ENCODE measurements at regions of chr15 and their contacts with region 1.

Region 1: GRCh38 chr15:77455696-77456321 is 35.1 kb downstream of the HMG20A start:
- DNase-seq: peak; percentile 95
- H3K4me3 ChIP-seq: peak overlapping the region in 1 of 3 experiments; percentile 23
- H3K27ac ChIP-seq: peak overlapping the region; percentile 96
- H3K4me1 ChIP-seq: peaks cover 54% of the 10 kb centered on the region
- H3K27me3 ChIP-seq: no peaks in the 10 kb centered on the region
- CTCF ChIP-seq: no peak
- POLR2A ChIP-seq: no peak

Region 2: DNA sequence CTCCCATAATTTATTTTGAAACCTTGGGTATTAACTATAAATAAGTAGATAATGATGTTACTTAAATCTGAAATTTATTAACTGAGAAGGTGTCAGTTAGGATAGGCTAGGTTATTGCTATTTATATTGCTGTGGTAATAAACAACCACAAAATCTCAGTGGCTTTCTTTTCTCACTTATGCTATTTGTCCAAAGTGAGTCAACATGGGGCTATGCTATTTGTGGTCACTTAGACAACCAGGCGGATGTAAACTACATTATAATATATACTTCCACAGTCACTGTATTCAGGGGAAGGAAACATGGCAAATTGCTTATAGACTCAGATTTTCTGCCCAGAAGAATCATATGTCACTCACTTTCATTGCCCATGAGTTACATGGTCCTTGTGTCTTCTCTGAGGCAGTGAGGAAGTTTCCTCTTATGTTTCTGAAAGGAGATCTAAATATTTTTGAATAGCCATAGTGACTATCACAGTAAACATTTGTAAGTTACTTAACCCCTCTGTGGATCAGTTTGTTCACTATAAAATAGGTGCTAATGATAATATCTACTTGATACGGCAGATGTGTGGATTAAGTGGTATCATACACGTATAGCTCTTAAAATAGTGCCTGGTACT is 15.3 kb before region 1 on chr15:
- CTCF ChIA-PET with region 1: interaction called, 10 read pairs
- POLR2A ChIA-PET with region 1: no interaction called
- dilution Hi-C with region 1: no loop called
- intact Hi-C with region 1: loop called (anchors 1 kb)
- DNase-seq: no peak
- H3K4me3 ChIP-seq: no peak overlapping the region
- H3K27ac ChIP-seq: no peak overlapping the region
- H3K4me1 ChIP-seq: no peaks in the 10 kb centered on the region
- H3K27me3 ChIP-seq: no peaks in the 10 kb centered on the region
- CTCF ChIP-seq: no peak
- POLR2A ChIP-seq: no peak

Region 3: GRCh38 chr15:77482570-77482969 is 26.8 kb after region 1 on chr15:
- CTCF ChIA-PET with region 1: interaction called, 28 read pairs
- POLR2A ChIA-PET with region 1: interaction called, 3 read pairs
- dilution Hi-C with region 1: no loop called
- intact Hi-C with region 1: loop called (anchors 1 kb)
- DNase-seq: peak; percentile 87
- H3K4me3 ChIP-seq: no peak overlapping the region
- H3K27ac ChIP-seq: peak overlapping the region; percentile 76
- H3K4me1 ChIP-seq: peaks cover 67% of the 10 kb centered on the region
- H3K27me3 ChIP-seq: no peaks in the 10 kb centered on the region
- CTCF ChIP-seq: no peak
- POLR2A ChIP-seq: no peak

Region 4: DNA sequence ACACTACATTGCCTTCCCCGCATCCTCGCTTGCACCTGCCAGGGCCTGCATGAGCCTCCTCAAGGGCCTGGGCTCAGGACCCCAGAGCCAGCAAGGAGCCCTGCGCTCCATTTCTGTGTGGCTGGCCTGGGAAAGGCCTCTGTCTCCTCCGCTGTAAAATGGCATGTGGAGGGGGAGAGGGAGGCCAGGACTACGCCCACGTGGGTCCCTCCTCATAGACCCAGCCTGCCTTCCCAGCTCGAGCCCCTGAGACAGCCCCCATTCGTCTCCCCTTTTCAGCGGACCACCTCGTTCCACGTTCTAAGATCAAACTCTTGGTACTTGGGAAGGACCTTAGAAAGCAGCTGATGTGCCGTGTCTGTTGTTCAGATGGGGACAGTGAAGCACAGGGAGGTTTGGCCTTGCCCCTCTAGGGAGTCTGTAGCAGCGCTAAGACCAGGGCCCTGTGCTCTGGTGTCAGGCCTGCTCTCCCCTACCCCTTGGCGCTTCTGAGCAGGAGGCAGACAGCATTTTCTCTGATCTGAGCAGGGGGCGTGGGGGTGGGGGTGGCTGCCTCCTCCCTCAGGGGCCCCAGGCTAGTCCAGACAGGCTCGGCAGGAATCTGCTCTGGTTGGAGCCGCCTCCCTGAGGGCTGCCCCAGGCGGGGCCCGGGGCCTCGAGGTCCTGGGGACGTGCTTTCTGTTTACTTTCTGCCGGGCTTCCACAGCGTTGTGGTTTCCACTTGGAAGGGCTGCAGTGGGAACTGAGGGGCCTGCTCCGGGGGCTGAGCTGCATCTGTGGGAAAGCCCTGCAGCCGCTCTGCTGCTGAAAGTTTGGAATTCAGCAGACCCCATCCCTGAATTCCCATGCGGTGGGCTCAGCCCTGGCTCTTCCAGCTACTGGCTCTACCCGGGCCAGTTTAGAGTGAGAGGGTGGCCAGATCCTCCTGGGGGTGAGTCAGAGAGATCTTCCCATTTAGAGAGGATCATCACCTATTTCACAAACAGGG is 71.3 kb after region 1 on chr15:
- CTCF ChIA-PET with region 1: no interaction called
- POLR2A ChIA-PET with region 1: no interaction called
- dilution Hi-C with region 1: no loop called
- intact Hi-C with region 1: no loop called
- DNase-seq: no peak
- H3K4me3 ChIP-seq: no peak overlapping the region
- H3K27ac ChIP-seq: no peak overlapping the region
- H3K4me1 ChIP-seq: no peaks in the 10 kb centered on the region
- H3K27me3 ChIP-seq: no peaks in the 10 kb centered on the region
- CTCF ChIP-seq: no peak
- POLR2A ChIP-seq: no peak